Ovary (tissue), 10 donors: ENCODE measurements at regions of chr16 and their contacts with region 1.

Region 1: DNA sequence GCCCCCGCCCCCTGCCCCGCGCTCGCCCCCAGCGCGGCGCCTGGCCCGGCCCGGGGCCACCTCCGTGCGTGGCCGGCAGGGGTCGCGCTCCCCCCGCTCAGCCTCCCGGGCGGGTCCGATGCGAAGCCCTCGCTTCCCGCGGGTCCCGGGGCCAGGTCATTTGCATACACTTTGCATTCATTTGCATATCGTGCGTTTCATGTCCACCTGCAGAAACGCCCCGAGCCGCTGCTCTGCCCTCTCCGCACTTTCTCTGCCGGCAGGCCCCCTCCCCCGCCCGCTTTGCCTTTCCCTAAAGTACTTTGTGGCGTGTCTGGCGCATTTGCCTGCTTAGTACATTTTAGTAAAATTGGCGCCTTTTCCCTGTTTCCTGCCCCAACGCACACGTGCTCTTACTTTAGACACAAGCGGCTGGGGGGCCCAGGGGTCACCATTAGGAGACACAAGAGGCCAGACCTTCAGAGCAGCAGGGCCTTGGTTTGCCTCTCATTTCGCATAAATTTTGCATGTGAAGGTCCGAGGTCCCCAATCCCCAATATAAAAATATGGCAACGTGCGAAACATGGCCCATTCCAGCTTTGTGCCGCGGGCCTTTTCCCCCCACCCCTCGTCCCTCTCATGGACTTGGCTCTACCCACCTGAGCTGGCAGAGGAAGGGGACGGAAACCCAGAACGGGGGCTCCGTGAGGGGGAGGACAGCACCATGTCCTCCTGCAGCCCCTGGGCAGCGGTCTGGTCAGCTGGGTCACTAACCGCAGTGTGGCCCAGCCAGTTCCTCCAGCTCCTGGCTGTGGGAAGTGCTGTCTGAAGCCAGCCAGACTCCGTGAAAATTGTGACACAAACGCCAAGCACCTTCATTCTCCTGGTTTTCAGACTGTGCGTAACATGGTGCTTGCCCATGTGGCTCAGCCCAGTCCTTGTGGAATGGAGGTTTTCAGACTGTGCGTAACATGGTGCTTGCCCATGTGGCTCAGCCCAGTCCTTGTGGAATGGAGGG is 34.8 kb downstream of the CBFA2T3 start:
- DNase-seq: peak in 3 of 5 donors; percentile 25 to 62 (median 41)
- H3K4me3 ChIP-seq: no peak overlapping the region
- H3K27ac ChIP-seq: no peak overlapping the region
- H3K4me1 ChIP-seq: peaks cover 3% of the 10 kb centered on the region
- H3K27me3 ChIP-seq: peaks cover 10% of the 10 kb centered on the region
- CTCF ChIP-seq: peak; percentile 26 to 35 (median 30)
- EP300 ChIP-seq: no peak
- POLR2A ChIP-seq: no peak

Region 2: DNA sequence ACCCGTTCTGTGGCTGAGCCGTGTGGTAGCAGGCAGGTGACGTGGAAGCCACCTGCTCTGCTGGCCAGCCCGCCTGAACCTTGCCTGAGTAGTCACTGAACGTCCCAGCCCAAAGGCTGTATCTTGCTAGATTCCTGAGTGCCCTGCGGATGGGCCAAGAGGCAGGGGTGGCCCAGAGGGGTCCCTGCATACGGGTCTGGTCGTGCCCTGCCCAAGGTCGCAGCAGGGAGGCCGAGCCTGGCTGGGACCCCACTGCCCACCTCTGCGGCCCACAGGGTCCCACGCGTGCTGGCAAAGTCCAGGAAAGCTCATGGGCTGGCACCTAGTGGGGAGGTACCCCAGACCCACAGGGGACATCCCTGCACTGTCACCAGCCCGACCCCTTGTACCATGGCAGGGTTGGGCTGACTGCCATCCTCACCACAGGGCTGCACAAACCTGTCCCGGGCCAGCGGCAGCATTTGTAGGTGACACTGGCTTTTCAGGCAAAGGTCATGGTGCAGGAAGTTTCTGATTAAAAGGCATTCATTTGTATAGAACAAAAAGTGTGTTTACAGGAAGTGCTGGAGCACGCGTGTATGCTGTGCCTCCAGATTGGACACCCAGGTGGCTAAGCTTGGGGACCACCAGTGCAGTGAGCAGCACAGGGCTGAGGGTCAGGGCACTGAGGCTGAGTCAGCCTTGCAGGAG is 417.1 kb before region 1 on chr16:
- intact Hi-C with region 1: no loop called
- DNase-seq: peak in 1 of 5 donors; percentile 53
- H3K4me3 ChIP-seq: no peak overlapping the region
- H3K27ac ChIP-seq: peak overlapping the region in 1 of 2 donors; percentile 32
- H3K4me1 ChIP-seq: peaks cover 14% of the 10 kb centered on the region
- H3K27me3 ChIP-seq: no peaks in the 10 kb centered on the region
- CTCF ChIP-seq: no peak
- EP300 ChIP-seq: no peak
- POLR2A ChIP-seq: no peak

Region 3: GRCh38 chr16:89161763-89162713 is 219.8 kb after region 1 on chr16:
- intact Hi-C with region 1: loop called in 1 of 4 experiments (anchors 5 kb)
- DNase-seq: no peak
- H3K4me3 ChIP-seq: no peak overlapping the region
- H3K27ac ChIP-seq: no peak overlapping the region
- H3K4me1 ChIP-seq: no peaks in the 10 kb centered on the region
- H3K27me3 ChIP-seq: peaks cover under 1% of the 10 kb centered on the region
- CTCF ChIP-seq: no peak
- EP300 ChIP-seq: no peak
- POLR2A ChIP-seq: no peak

Region 4: DNA sequence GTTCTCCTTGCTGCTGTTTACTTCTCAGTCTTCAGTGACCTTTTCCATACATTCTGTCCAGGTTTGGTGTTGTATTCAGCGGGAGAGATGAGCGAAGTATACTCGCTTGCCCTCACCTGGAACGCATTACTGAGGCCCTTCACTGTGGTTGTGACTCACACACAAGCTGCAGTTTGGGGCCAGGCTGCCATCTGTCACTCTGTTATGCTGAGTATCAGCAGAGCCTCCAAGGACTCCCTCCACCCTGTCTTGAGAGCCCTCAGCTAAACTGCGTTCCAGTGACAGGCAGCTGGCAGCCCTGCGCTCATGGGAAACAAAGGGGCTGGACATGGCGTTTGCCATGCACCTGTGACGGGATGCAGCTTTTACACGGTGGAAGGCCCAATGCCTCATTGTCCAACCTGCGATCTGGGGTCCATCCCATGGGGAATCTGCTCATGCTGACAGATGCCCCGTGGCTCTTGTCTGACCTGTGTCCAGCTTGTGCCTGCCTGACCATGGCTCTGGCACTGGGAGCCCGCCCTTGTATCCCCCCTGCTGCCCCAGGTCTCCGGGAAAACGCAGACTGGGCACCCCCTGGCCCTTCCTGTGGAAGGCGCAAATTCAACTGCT is 268.8 kb after region 1 on chr16:
- intact Hi-C with region 1: loop called in 3 of 4 experiments (anchors 5 to 10 kb)
- DNase-seq: peak in 1 of 5 donors; percentile 19
- H3K4me3 ChIP-seq: no peak overlapping the region
- H3K27ac ChIP-seq: no peak overlapping the region
- H3K4me1 ChIP-seq: no peaks in the 10 kb centered on the region
- H3K27me3 ChIP-seq: no peaks in the 10 kb centered on the region
- CTCF ChIP-seq: no peak
- EP300 ChIP-seq: no peak
- POLR2A ChIP-seq: no peak

Region 5: GRCh38 chr16:89217388-89218191 is 275.4 kb after region 1 on chr16 and contains the start of gene ZNF778:
- intact Hi-C with region 1: loop called in 3 of 4 experiments (anchors 5 to 10 kb)
- DNase-seq: peak; percentile 77 to 88 (median 82)
- H3K4me3 ChIP-seq: peak within 1 kb of the TSS; percentile 99
- H3K27ac ChIP-seq: peak within 1 kb of the TSS; percentile 77 to 96
- H3K4me1 ChIP-seq: peaks cover 2% of the 10 kb centered on the region
- H3K27me3 ChIP-seq: no peaks in the 10 kb centered on the region
- CTCF ChIP-seq: peak in 1 of 3 donors; percentile 30
- EP300 ChIP-seq: no peak
- POLR2A ChIP-seq: peak; percentile 80
- total RNA-seq, gene ZNF778: 7.8 to 71.9 (median 8.4) TPM